PC-9 (cell line): ENCODE measurements at regions of chr5 and their contacts with region 1.

Region 1: GRCh38 chr5:13976867-13977830 is 32.7 kb upstream of the DNAH5 start:
- DNase-seq: peak; percentile 62 to 67
- H3K4me3 ChIP-seq: no peak overlapping the region
- H3K27ac ChIP-seq: no peak overlapping the region
- H3K4me1 ChIP-seq: no peaks in the 10 kb centered on the region
- H3K27me3 ChIP-seq: no peaks in the 10 kb centered on the region
- CTCF ChIP-seq: peak; percentile 85

Region 2: DNA sequence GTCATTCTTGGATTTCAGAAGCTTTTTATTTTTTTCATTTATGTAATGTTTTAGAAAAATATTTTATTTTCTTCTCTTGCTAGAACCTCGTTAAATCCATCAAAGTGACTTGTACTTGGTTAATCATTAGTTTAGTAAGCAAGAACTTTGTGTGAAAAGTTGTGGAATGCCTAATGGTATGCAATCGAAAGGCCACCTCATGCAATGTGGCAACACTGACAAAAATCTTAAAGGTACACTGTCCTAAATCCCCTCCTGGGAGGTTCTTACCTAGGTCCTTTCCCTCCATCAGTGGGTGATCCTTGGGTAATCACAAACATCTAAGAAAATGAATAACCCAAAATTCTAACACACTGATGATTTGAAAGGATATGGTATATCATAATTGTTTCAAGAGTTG is 336.9 kb before region 1 on chr5:
- CTCF ChIA-PET with region 1: no interaction called
- POLR2A ChIA-PET with region 1: no interaction called
- intact Hi-C with region 1: no loop called
- DNase-seq: no peak
- H3K4me3 ChIP-seq: no peak overlapping the region
- H3K27ac ChIP-seq: no peak overlapping the region
- H3K4me1 ChIP-seq: no peaks in the 10 kb centered on the region; the same call in 1 of the 2 replicates
- H3K27me3 ChIP-seq: no peaks in the 10 kb centered on the region
- CTCF ChIP-seq: no peak

Region 3: DNA sequence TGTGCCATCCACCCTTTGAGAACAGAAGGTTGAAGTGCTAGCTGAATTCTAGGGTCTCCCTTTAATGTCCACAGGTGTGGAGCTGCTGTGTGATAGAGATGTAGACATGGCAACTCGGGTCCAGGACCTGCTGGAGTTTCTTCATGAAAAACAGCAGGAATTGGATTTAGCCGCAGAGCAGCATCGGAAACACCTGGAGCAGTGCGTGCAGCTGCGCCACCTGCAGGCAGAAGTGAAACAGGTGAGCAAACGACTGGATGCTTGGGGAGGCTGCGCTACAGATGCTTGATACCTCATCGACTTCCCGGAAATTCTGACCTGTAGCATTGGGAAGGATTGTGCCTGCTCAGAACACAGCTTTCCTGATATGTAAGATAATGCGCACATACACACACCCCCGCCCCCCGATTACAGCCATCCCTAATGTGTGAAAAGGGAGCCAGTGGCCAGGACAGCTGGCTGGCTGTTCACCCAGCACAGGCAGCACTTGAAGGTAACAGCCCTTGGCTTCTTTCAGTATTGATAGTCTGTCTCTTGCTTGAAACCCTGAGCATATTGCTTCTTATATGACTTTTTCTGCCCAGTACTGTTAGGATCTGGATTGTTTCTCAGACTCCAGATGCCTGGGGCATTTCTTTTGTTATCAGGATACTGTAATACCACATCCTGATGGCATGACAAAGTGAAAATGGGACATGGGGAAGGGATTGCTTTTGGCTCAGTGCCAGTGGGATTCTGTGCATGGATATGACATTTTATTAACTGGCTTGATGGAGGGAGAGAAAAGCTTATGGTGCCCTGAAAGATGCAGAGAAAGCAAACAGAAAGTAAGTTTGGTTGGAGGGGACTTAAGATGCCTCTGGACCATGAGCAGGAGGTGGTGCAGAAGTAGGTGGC is 387.7 kb after region 1 on chr5:
- CTCF ChIA-PET with region 1: no interaction called
- POLR2A ChIA-PET with region 1: no interaction called
- intact Hi-C with region 1: loop called (anchors 2 kb)
- DNase-seq: peak in 1 of 2 experiments; percentile 53
- H3K4me3 ChIP-seq: no peak overlapping the region
- H3K27ac ChIP-seq: no peak overlapping the region
- H3K4me1 ChIP-seq: peaks cover 19% of the 10 kb centered on the region
- H3K27me3 ChIP-seq: no peaks in the 10 kb centered on the region
- CTCF ChIP-seq: peak; percentile 67

Region 4: DNA sequence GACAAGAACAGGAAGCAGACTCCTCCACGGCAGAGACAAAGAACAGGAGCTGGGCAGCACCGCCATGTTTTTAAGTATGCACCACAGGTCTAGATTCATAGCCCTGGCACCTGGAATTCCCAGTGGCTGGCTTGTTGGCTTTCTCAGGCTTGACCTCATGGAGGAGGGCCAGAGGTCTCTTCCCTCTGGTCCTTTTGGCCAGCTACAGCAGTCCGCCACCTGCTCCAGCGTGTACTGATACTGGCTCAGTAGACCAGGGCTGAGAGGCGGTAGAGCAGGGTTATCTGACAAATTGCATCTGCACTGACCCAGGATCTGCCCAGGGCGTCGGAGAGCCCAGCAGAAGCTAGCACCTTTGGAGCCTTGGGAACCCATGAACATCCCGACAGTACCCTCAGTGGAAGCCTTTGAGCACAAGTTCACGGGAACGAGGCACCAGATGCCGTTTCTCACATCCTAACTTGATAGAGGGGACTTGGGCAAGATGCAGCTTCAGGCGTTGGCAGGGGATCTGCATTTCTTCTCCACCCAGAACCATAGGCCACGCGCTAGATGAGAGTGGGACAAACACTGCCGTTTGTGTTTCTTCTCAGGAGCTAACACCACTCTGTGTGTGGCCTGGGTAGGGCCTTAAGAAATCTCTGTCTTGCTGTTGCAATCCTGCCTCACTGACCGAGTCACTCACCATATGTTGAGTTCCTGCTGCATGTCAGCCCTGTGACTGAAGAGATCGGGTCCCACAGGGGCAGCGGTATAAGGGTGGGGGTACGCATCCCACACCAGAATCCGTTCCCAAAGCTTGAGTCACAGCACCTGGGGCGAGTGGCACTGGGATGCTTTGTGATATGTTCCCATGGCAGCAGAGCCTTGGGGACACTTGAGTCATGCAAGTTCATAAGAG is 514.1 kb after region 1 on chr5:
- CTCF ChIA-PET with region 1: no interaction called
- POLR2A ChIA-PET with region 1: no interaction called
- intact Hi-C with region 1: loop called (anchors 5 kb)
- DNase-seq: peak; percentile 60 to 92
- H3K4me3 ChIP-seq: no peak overlapping the region
- H3K27ac ChIP-seq: no peak overlapping the region
- H3K4me1 ChIP-seq: no peaks in the 10 kb centered on the region
- H3K27me3 ChIP-seq: no peaks in the 10 kb centered on the region
- CTCF ChIP-seq: no peak

Region 5: GRCh38 chr5:14644623-14645237 is 667.6 kb after region 1 on chr5:
- CTCF ChIA-PET with region 1: interaction called, 4 read pairs
- POLR2A ChIA-PET with region 1: no interaction called
- intact Hi-C with region 1: loop called (anchors 1 kb)
- DNase-seq: no peak
- H3K4me3 ChIP-seq: no peak overlapping the region
- H3K27ac ChIP-seq: no peak overlapping the region
- H3K4me1 ChIP-seq: no peaks in the 10 kb centered on the region
- H3K27me3 ChIP-seq: peaks cover 3% of the 10 kb centered on the region
- CTCF ChIP-seq: no peak